ENCODE measurements at regions of chr2 and their contacts with region 1.

Region 1: DNA sequence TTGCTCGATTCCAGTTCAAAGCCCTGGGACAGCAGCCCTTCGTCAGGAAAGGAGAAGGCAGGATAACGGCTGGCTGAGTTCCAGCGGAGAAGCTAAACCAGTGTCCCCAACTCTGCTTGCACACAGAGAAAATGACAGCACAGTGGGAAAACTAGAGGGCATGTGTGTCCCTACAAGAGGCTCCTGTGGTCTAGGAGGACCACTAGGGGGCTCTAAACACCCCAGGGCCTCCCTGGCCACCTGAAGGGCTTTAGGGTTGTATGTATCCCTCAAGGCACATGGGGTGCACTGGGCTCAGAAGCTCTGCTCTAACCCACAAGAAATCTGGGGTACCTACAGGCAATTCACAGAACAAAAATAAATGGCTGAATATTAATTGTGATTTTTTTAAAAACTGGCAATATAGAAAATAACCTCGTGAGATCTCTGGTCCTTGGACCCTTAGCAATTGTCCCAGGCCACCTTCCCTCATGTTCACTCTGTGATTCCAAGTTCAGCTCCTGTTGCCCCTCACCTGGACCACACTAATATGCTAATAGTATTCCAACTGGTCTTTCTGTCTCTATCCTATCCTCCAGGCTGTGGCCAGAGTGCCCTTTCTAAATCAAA is 17.5 kb downstream of the STAT1 start:
- DNase-seq: peak; percentile 60 to 69
- H3K4me3 ChIP-seq: no peak overlapping the region
- H3K4me3 Mint-ChIP-seq: no peak overlapping the region
- H3K27ac Mint-ChIP-seq: no peak overlapping the region
- H3K4me1 ChIP-seq: peaks cover 7% of the 10 kb centered on the region
- H3K4me1 Mint-ChIP-seq: peaks cover 11% of the 10 kb centered on the region
- H3K27me3 ChIP-seq: no peaks in the 10 kb centered on the region
- H3K27me3 Mint-ChIP-seq: no peaks in the 10 kb centered on the region
- CTCF ChIP-seq: peak; percentile 83 to 96

Region 2: GRCh38 chr2:191013932-191014652 is 17.6 kb after region 1 on chr2 and contains the start of gene STAT1:
- CTCF ChIA-PET with region 1: no interaction called
- POLR2A ChIA-PET with region 1: no interaction called
- intact Hi-C with region 1: loop called (anchors 1 kb)
- DNase-seq: peak; percentile 90 to 98
- H3K4me3 ChIP-seq: peak within 1 kb of the TSS; percentile 72
- H3K4me3 Mint-ChIP-seq: no peak within 1 kb of the TSS
- H3K27ac Mint-ChIP-seq: no peak within 1 kb of the TSS
- H3K4me1 ChIP-seq: peaks cover 14% of the 10 kb centered on the region
- H3K4me1 Mint-ChIP-seq: no peaks in the 10 kb centered on the region
- H3K27me3 ChIP-seq: no peaks in the 10 kb centered on the region
- H3K27me3 Mint-ChIP-seq: no peaks in the 10 kb centered on the region
- CTCF ChIP-seq: peak; percentile 13 to 23
- total RNA-seq, gene STAT1: 113 and 126 TPM in 2 replicates

Region 3: GRCh38 chr2:191030521-191031154 is 34.2 kb after region 1 on chr2:
- CTCF ChIA-PET with region 1: no interaction called
- POLR2A ChIA-PET with region 1: no interaction called
- intact Hi-C with region 1: loop called (anchors 1 kb)
- DNase-seq: peak; percentile 56 to 64
- H3K4me3 ChIP-seq: no peak overlapping the region
- H3K4me3 Mint-ChIP-seq: peak overlapping the region; percentile 43
- H3K27ac Mint-ChIP-seq: peak overlapping the region; percentile 34
- H3K4me1 ChIP-seq: peaks cover 43% of the 10 kb centered on the region
- H3K4me1 Mint-ChIP-seq: peaks cover 45% of the 10 kb centered on the region
- H3K27me3 ChIP-seq: no peaks in the 10 kb centered on the region
- H3K27me3 Mint-ChIP-seq: no peaks in the 10 kb centered on the region
- CTCF ChIP-seq: peak; percentile 63 to 75

Region 4: DNA sequence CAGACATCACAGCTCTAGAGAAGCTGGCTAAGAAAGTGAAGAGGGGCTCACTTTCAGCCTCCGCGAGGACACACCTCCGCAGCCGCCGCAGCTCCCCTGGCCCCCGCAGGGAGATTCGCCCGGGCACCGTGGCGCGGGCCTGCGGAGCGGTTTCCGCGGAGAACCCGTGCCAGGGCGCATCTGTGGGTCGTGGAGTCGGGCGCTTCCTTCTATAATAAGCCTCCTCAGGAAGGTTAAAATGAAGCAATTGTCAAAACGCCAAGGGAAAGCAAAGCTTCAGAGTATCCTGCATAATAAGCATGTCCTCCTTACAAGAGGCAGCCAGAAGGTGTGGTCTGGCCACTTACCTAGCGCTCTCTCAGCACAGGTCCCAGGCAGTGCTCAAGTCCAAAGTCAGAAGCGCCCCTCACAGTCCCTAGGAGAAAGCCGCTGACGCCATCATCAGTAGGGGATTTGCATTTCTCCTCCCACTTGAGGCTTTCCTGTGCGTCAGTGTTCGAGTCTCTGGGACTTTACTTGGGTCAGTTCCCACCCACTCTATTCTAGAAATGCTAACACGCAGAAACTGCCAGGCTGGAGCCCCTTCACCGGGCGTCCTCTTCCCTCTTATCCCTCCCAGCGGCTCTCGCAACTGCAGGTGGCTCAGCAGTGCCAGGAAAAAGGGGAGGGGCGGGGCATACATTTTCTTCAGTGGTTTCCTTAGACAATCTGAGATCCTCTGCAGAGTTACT is 154.3 kb after region 1 on chr2 and contains the start of gene STAT4:
- CTCF ChIA-PET with region 1: no interaction called
- POLR2A ChIA-PET with region 1: no interaction called
- intact Hi-C with region 1: loop called (anchors 1 kb)
- DNase-seq: peak in 1 of 2 experiments; percentile 24
- H3K4me3 ChIP-seq: peak within 1 kb of the TSS; percentile 25
- H3K4me3 Mint-ChIP-seq: peak within 1 kb of the TSS; percentile 70
- H3K27ac Mint-ChIP-seq: no peak within 1 kb of the TSS
- H3K4me1 ChIP-seq: no peaks in the 10 kb centered on the region
- H3K4me1 Mint-ChIP-seq: peaks cover 5% of the 10 kb centered on the region
- H3K27me3 ChIP-seq: no peaks in the 10 kb centered on the region
- H3K27me3 Mint-ChIP-seq: peaks cover 7% of the 10 kb centered on the region
- CTCF ChIP-seq: no peak
- total RNA-seq, gene STAT4: 0.19 and 0.48 TPM in 2 replicates

Measured in Caco-2 (cell line).